ENCODE measurements at regions of chr11 and their contacts with region 1.

Region 1: GRCh38 chr11:91921974-91922373 is 302.6 kb upstream of the FAT3 start:
- DNase-seq: no peak
- ATAC-seq: no peak

Region 2: GRCh38 chr11:91850533-91851275 is 71.3 kb before region 1 on chr11:
- intact Hi-C with region 1: no loop called
- DNase-seq: no peak
- ATAC-seq: no peak

Region 3: DNA sequence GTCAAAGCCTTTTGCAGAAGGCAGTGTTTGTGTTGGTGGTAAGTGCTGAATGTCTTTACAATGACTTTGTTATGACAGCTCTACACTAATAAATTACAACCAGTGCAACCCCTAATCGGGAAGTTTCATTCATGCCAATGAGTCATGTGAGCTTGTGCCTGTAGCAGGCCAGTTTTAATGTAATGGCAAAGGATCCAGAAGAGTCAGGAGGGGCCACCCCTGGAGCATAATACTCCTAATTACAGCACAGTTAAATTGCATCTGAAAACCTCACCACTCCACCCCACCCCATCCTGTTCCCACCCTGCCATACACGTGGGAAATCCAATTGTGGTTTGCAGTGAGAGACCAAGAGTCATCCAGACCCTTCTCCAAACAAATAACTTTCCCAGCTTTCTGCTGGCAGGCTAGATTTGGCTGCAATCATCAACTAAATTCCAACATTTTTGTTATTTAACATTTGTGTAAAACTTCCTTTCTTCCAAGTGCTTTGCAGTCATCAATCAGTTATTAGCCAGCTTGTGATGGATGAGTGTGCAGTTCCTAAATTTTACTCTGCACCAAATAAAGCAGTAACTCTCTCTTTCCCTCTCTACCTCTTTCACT is 25.3 kb after region 1 on chr11:
- intact Hi-C with region 1: loop called (anchors 2 kb)
- DNase-seq: no peak
- ATAC-seq: peak; percentile 61

Region 4: DNA sequence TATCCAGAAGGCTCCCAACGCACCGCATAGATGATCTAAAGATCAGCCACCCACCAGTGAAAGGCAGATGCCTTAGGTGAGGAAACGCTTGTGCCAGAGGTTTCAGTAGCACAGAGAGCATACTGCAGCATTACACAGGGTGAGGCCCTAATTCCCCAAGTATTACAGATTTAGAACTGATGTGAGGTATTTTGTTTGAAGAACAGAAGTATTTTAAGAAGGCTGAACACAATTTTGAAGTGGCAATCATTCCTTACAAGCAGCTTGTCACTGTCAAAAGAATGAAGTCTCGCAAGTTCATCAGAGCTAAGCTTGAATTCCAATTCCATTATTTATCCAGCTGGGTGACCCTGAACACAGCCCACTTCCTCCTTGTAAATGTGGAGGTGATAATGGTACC is 232.6 kb after region 1 on chr11:
- intact Hi-C with region 1: no loop called
- DNase-seq: no peak
- ATAC-seq: no peak